IMR-90 (cell line): ENCODE measurements at regions of chr1 and their contacts with region 1.

Region 1: DNA sequence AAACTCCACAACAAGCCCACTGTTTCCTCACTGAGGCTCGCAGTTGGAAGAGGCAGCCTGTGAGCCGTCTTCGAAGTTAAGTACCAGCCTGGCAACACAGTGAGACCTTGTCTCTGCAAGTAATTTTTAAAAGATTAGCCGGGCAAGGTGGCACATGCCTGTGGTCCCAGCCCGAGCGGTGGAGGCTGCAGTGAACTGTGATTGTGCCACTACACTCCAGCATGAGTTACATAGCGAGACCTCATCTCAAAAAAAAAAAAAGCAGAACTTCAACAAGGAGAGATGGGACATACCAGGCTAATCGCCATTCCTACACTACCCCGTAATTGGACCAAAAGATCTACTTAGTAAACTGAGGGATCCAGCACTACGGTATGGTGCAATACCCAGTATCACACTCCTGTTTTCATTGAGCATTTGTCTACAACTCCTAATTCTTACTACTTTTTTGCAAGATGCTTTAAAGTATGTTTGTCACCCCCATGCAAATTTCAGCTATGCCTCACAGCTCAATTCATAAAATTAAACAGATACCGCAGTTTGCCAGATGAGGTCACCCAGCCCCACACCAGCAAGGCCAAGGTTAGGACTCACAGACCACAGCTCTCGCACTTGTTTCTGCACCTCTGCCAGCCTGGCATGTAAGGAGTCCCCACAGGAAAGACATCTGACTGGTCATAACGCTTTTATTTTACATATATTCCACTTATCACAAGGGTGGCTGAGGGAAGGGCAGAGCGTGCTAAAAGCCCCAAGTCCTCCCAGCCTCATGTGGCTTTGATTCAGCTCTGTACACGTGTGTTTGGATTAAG is 21.0 kb downstream of the SDE2 start:
- DNase-seq: no peak
- ATAC-seq: no peak
- H3K4me3 ChIP-seq: no peak overlapping the region
- H3K27ac ChIP-seq: no peak overlapping the region
- H3K4me1 ChIP-seq: no peaks in the 10 kb centered on the region
- H3K27me3 ChIP-seq: no peaks in the 10 kb centered on the region
- CTCF ChIP-seq: no peak
- POLR2A ChIP-seq: no peak
- RAD21 ChIP-seq: no peak

Region 2: DNA sequence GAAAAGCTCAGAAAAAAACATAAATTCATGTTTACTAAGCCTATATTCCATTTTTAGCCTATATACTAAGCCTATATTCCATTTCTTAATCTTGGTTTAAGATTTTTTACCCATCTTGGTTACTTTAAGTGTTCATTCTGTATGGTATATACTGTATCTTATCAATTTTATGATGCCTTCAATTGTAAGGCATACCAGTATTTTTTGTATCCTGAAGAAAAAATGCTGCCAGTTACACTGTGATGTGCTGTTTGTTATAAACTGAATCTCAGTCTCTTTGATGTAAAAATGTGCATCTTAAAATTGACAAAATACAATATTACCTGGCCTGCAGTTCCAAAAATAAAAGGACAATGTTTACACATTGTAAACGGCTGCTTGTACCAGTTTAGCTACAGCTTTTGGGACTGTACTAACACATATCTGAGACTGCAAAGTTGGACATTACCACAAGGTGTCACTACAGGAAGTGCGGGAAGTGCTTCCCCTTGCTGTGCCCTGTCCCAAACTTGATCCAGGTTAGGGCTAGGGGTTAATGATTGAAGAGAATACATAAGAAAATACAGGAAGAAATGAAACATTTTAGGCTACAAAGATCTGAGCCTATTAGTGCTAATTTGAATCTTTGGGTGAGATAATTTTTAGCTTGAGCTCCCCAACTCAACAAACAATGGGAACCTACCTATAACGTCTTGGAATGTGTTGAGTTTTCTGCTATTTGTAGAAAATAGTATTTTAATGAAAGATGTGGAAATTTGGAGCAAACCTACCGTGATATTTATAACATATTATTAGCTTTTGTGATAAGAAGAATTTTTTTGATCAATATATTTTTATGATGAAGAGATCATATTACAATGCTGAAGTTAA is 659.2 kb before region 1 on chr1:
- CTCF ChIA-PET with region 1: interaction called, 4 read pairs
- POLR2A ChIA-PET with region 1: no interaction called
- dilution Hi-C with region 1: no loop called
- in situ Hi-C with region 1: loop called (anchors 10 kb)
- intact Hi-C with region 1: loop called (anchors 1 kb)
- DNase-seq: peak; percentile 36
- ATAC-seq: peak; percentile 94
- H3K4me3 ChIP-seq: no peak overlapping the region
- H3K27ac ChIP-seq: no peak overlapping the region
- H3K4me1 ChIP-seq: no peaks in the 10 kb centered on the region
- H3K27me3 ChIP-seq: no peaks in the 10 kb centered on the region
- CTCF ChIP-seq: peak; percentile 66
- POLR2A ChIP-seq: no peak
- RAD21 ChIP-seq: peak; percentile 58

Region 3: DNA sequence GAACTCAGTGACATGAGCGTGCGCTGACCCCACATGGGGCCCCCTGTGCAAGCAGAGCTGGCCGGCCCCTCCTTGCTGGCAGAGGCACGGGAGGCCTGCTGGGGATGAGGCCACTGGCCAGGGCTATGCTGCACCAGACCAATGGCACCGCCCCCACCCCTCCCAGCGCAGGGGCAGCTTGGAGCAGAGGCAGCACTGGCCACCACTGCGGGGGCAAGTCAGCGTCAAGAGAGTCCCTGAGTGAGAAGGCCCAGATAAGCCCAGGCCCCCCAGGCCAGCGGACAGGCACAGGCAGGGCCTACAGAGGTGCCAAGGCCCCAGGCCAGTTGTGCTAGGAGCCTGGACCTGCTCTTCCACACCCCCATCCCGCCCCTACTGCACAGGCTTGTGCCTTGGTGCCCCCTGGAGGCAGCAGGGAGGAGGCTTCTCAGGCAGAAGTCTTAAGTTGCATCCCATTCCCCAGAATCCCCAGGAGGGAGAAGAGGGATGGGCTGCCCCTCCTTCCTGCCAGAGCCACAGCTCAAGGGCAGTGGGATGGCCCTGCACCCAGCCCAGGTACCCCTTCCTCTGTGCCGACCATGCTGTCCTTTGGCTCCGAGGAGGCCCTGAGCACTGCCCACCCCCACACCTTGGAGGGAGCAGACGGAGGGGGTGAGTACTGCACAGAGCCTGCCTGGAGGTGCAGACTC is 132.4 kb before region 1 on chr1:
- CTCF ChIA-PET with region 1: no interaction called
- POLR2A ChIA-PET with region 1: no interaction called
- dilution Hi-C with region 1: no loop called
- in situ Hi-C with region 1: no loop called
- intact Hi-C with region 1: loop called (anchors 10 kb)
- DNase-seq: peak; percentile 75
- ATAC-seq: peak; percentile 86
- H3K4me3 ChIP-seq: no peak overlapping the region
- H3K27ac ChIP-seq: no peak overlapping the region
- H3K4me1 ChIP-seq: peaks cover 3% of the 10 kb centered on the region; the same call in 1 of the 2 replicates
- H3K27me3 ChIP-seq: no peaks in the 10 kb centered on the region
- CTCF ChIP-seq: peak; percentile 89
- POLR2A ChIP-seq: 0 out of 2 replicates have a peak, but pooled peaks have one; percentile 54
- RAD21 ChIP-seq: peak; percentile 93

Region 4: DNA sequence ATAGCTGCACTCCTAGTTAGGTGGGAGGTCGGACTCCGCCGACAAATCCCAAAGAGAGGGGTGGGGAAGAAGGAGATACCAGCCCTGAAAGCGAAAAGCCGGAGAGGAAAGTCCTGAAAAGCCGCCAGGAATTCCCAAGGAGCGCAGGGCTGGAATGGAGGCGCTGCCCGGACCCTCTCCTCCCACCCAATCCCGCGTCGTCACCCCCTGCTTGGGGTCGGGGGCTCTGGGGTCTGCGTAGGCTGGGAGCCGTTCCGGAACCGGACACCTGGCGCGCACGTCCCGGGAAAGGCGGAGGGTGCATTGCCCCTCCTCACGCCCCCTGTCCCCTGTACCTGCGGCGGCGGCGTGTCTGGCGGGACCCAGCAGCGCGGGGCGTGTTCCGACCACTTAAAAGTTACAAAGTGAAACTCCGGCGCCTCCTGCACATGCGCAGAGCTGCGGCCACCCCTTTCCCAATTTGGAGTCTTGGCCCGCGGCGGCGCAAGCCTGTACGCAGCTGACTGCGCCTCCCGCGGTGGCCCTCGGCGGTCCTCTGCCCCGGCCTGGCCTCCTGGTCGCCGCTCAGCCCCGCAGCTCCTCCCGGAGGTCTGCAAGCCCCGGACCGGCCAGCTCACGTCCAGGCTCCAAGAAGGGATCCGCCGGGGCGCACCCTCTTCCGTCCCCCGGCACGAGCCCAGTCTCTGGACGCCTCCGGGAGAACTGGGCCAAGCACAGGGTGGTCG is 96.0 kb before region 1 on chr1 and contains the start of gene TMEM63A:
- CTCF ChIA-PET with region 1: interaction called, 3 read pairs
- POLR2A ChIA-PET with region 1: no interaction called
- dilution Hi-C with region 1: no loop called
- in situ Hi-C with region 1: no loop called
- intact Hi-C with region 1: loop called (anchors 1 kb)
- DNase-seq: peak; percentile 76
- ATAC-seq: peak; percentile 84
- H3K4me3 ChIP-seq: peak within 1 kb of the TSS; percentile 94
- H3K27ac ChIP-seq: peak within 1 kb of the TSS; percentile 71
- H3K4me1 ChIP-seq: peaks cover 12% of the 10 kb centered on the region; the same call in 1 of the 2 replicates
- H3K27me3 ChIP-seq: no peaks in the 10 kb centered on the region
- CTCF ChIP-seq: peak; percentile 30; the same call in 1 of the 2 replicates
- POLR2A ChIP-seq: peak; percentile 42; the same call in 1 of the 2 replicates
- RAD21 ChIP-seq: peak; percentile 27
- total RNA-seq, gene TMEM63A: 4.7 and 5.6 TPM in 2 replicates

Region 5: DNA sequence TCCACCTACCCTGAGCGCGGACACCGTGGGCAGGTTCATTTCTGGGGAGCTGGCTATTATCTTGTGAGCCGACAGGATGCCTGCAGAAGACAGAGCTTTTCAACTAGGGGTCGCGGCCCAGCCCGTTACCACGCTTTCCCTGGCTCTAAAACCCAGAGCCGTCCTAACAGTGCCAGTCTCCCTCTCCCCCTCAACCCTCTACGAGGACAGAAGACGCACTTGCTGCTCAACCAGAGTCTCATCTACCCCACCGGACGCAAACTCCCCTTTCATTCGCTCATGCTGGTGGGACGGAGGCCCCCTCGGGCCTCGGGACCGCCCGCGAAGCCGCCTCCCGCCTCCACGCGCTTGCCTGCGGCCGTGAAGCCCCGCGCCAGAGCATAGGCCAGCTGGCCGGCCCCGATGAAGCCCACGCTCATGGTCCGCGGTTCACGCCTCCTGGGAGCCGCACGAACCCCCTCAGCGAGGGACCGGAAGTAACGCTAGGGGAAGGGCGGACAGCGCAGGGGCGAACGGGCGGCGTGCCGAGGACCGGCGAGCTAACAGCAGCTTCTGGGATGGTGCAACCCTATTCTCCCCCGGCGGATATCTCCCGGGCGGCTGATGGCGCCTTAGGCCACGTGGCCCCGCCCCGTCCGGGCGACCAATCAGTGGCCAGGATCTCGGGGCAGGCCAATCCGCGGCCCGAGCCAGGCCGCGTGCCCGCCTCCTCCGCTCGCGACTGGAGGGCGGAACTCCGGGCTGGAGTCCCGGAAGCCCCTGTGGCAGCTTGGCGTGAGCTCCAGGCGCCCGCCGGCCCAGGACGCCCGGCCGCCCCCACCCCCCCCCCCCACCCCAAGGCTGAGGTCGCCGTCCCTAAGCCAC is 54.2 kb before region 1 on chr1 and contains the start of gene PYCR2:
- CTCF ChIA-PET with region 1: interaction called, 5 read pairs
- POLR2A ChIA-PET with region 1: no interaction called
- dilution Hi-C with region 1: no loop called
- in situ Hi-C with region 1: no loop called
- intact Hi-C with region 1: loop called (anchors 5 kb)
- DNase-seq: peak; percentile 96
- ATAC-seq: peak; percentile 98
- H3K4me3 ChIP-seq: peak within 1 kb of the TSS; percentile 63
- H3K27ac ChIP-seq: peak within 1 kb of the TSS; percentile 87
- H3K4me1 ChIP-seq: peaks cover 5% of the 10 kb centered on the region; the same call in 1 of the 2 replicates
- H3K27me3 ChIP-seq: no peaks in the 10 kb centered on the region
- CTCF ChIP-seq: no peak
- POLR2A ChIP-seq: peak; percentile 83; the same call in 1 of the 2 replicates
- RAD21 ChIP-seq: no peak
- total RNA-seq, gene PYCR2: 31.4 and 34.4 TPM in 2 replicates

Region 6: GRCh38 chr1:226176870-226177269 is 198.7 kb after region 1 on chr1:
- CTCF ChIA-PET with region 1: no interaction called
- POLR2A ChIA-PET with region 1: no interaction called
- dilution Hi-C with region 1: no loop called
- in situ Hi-C with region 1: no loop called
- intact Hi-C with region 1: no loop called
- DNase-seq: no peak
- ATAC-seq: no peak
- H3K4me3 ChIP-seq: no peak overlapping the region
- H3K27ac ChIP-seq: no peak overlapping the region
- H3K4me1 ChIP-seq: 0 out of 2 replicates have a peak, but pooled peaks cover 2% of the 10 kb centered on the region
- H3K27me3 ChIP-seq: no peaks in the 10 kb centered on the region
- CTCF ChIP-seq: no peak
- POLR2A ChIP-seq: no peak
- RAD21 ChIP-seq: no peak

Region 7: DNA sequence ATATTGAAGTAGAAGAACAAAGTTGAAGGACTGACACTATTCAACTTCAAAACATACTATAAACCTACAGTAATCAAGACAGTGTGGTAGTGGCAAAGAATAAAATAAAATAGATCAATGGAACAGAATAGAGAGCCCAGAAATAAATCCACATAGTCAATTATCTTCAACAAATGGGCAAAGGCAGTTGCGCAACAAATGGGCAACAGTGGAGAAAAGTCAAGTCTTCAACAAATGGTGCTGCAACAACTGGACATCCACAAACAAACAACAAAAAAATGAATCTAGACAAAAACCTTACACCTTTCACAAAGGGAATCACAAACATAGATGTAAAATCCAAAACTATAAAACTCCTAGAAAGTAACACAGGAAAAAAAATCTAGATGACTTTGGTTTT is 283.7 kb after region 1 on chr1:
- CTCF ChIA-PET with region 1: no interaction called
- POLR2A ChIA-PET with region 1: no interaction called
- dilution Hi-C with region 1: no loop called
- in situ Hi-C with region 1: no loop called
- intact Hi-C with region 1: no loop called
- DNase-seq: no peak
- ATAC-seq: no peak
- H3K4me3 ChIP-seq: no peak overlapping the region
- H3K27ac ChIP-seq: no peak overlapping the region
- H3K4me1 ChIP-seq: no peaks in the 10 kb centered on the region
- H3K27me3 ChIP-seq: no peaks in the 10 kb centered on the region
- CTCF ChIP-seq: no peak
- POLR2A ChIP-seq: no peak
- RAD21 ChIP-seq: no peak